Dorsolateral prefrontal cortex (tissue), 120 donors: ENCODE measurements at regions of chr1 and their contacts with region 1.

Region 1: DNA sequence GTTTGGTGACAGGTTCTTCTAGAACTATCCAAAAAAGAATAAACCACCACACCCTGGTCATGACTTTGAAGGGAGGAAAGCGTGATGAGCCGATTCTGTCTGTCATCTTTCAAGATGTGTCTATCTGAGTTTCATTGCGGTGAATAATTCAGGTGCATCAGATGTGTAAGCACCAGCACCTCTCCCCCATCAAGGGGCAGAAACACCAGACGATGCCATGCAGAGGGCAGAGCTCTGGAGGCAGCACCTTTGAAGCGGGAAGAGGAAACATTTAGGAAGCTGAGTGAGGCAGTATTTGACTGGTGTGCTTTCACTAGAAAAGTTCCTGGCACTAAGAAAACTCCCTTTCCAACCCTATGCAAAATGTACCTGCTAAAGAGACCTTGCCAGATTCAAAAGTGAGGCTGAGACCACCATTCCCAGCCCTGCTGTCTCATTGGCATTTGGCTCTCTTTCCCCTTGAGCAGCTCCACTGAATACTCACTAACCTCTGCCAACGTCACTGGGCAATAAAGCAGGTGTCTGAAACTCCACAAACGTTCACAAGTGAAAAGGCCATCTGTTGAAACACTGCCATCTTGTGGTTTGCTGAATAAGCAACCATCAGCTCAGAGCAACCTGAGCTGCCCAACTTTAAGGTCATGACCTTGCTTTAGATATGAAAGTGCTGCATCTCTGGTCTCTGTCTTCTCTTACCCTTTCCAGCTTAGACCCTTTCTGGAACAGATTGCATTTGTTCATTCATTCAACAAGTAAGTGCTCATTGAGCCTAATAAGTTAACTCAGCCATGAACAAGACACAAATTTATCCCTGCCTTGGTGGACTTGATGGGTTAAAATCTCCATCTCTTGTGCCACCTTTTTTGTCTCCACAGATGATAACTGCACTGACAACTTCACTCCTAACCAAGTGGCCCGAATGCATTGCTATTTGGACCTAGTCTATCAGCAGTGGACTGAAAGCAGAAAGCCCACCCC is 228.6 kb downstream of the PAPPA2 start:
- DNase-seq: peak in 1 of 10 donors; percentile 34
- H3K4me3 ChIP-seq: no peak overlapping the region
- H3K27ac ChIP-seq: no peak overlapping the region
- H3K27me3 ChIP-seq: no peaks in the 10 kb centered on the region
- CTCF ChIP-seq: peak; percentile 43 to 80 (median 69)

Region 2: DNA sequence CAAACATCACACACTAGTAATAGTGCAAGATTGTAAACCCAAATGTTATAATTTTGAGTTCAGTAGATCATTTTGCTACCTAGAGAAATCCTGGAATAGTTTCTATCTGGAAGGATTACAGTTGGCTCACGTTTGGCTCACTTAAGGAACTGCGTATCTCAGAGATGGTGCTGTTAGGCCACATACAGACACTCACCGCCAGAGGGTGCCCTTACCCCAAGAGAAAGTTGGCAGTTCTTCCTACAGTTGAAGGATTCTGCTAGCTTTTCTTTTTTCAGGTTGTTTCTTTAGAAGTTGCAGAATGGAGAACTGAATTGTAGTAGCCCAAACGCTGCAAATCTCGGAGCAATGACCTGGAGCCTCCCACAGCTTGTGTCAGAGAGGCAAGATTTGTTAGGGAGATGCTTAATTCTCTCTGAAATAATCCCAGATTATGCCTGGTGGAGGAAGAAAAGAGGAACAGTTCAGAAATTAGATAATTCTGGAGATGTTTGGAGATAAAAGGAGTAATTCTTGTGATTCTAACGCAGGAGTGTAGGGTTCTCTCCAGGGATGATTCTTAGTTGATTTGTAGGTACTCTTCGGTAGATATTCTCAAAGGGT is 316.5 kb before region 1 on chr1:
- intact Hi-C with region 1: loop called in 1 of 2 experiments (anchors 10 kb)
- DNase-seq: peak; percentile 58 to 86 (median 70)
- H3K4me3 ChIP-seq: no peak overlapping the region
- H3K27ac ChIP-seq: no peak overlapping the region
- H3K27me3 ChIP-seq: no peaks in the 10 kb centered on the region
- CTCF ChIP-seq: peak; percentile 64 to 93 (median 86)

Region 3: GRCh38 chr1:176567190-176567794 is 124.2 kb before region 1 on chr1:
- intact Hi-C with region 1: no loop called
- DNase-seq: no peak
- H3K4me3 ChIP-seq: no peak overlapping the region
- H3K27ac ChIP-seq: peak overlapping the region in 1 of 59 donors; percentile 32
- H3K27me3 ChIP-seq: no peaks in the 10 kb centered on the region
- CTCF ChIP-seq: no peak

Region 4: DNA sequence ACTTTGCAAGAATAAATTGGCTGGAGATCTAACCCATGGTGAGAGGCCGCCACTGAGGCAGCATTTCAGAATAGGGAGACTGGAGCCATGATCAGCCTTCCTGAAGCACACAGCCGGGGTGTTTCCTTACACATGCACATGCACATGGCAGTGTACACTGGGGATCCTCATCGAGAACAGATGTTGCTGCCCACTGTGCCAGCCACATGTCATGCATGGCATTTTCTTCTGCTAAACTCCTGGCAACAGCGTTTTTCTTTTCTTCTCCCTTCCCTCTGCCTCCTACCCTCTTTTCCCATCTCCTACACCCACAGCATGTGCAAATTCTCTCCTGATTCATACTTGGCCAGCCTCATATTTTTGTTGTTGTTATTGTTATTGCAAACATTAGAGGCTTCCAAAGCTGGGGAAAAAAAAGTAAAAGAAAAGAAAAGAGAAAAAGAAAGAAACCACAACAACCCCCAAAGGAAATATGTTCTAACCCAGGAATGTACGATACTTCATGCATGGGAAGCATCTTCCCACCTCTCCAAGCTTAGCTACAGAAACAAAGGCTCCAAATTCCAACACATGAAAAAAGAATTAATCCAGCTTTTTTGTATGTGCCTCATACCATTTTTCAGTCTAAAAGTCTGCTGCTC is 129.0 kb after region 1 on chr1:
- intact Hi-C with region 1: loop called in 1 of 2 experiments (anchors 5 kb)
- DNase-seq: peak in 5 of 10 donors; percentile 19 to 58 (median 34)
- H3K4me3 ChIP-seq: no peak overlapping the region
- H3K27ac ChIP-seq: peak overlapping the region in 1 of 59 donors; percentile 18
- H3K27me3 ChIP-seq: no peaks in the 10 kb centered on the region
- CTCF ChIP-seq: peak in 2 of 56 donors; percentile 12